ENCODE measurements at regions of chr7 and their contacts with region 1.

Region 1: DNA sequence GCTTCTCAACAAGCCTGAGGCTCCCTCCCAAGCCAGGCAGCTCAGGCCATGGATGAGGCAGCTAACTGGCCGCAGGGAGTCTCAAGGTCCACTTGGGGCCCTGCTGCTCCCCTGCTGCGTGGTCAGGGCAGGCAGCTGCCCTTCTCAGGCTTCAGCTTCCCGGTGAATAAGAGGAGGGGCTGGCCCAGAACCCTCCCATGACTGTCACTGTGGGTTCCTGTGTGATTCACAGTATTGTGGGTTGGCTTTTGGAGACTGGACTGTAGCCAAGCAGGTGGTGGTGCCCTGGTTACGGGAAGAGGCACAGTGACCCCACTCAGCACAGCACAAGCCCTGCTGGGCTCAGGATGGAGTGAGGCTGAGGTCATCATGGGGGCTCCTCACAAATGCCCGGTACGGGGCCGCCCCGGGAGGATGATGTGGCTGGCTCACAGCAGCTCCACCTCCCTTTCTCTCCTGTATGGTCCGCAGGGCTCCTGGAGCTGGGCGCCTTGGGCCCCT is 189.8 kb downstream of the HECW1 start:
- DNase-seq: peak; percentile 68
- ATAC-seq: peak; percentile 81
- H3K4me3 Mint-ChIP-seq: no peak overlapping the region
- H3K27ac Mint-ChIP-seq: no peak overlapping the region
- H3K4me1 Mint-ChIP-seq: peaks cover 32% of the 10 kb centered on the region
- H3K27me3 Mint-ChIP-seq: peaks cover 16% of the 10 kb centered on the region
- CTCF ChIP-seq: no peak

Region 2: DNA sequence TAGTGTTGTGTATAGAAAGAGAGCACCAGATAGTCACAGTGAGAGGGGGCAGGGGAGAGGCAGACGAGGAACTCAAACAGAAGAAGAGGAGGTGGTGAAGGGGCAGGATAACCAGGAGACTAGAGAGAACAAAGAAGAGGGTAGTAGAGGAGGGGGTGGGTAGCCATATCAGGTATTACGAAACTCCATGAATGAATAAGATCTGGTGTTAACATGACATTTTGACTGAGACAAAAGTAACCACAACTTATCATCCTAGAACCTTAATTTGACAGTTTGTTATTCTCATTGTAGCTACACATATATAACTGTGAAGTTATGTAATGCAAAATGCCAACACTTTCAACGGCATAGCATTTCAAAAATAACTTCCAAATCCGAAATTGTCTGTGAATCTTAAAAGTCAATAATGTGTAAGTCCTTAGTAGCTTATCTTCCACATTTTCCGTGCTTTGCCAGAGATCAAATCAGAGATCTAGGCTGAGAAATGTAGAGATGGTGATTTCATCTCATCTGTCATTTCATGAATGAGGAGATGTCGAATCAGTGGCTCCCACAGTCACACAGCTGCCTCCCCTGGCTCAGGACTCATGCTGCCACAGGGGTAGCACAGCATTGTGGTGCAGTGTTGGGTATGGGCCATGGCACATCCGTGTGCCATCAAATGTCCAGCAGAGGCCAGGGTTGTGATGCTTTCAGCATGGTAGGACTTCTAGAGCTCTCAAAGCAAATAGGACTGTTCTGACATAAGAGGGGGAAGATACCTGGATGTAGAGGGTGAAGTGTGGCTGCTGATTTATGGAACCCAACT is 12.3 kb after region 1 on chr7:
- CTCF ChIA-PET with region 1: interaction called, 20 read pairs
- POLR2A ChIA-PET with region 1: interaction called, 3 read pairs
- intact Hi-C with region 1: no loop called
- DNase-seq: peak; percentile 48
- ATAC-seq: peak; percentile 88
- H3K4me3 Mint-ChIP-seq: no peak overlapping the region
- H3K27ac Mint-ChIP-seq: no peak overlapping the region
- H3K4me1 Mint-ChIP-seq: peaks cover 16% of the 10 kb centered on the region
- H3K27me3 Mint-ChIP-seq: peaks cover 3% of the 10 kb centered on the region
- CTCF ChIP-seq: no peak

Region 3: GRCh38 chr7:43647673-43648472 is 345.6 kb after region 1 on chr7:
- CTCF ChIA-PET with region 1: no interaction called
- POLR2A ChIA-PET with region 1: no interaction called
- intact Hi-C with region 1: no loop called
- DNase-seq: peak; percentile 74
- ATAC-seq: peak; percentile 58
- H3K4me3 Mint-ChIP-seq: peak overlapping the region; percentile 57
- H3K27ac Mint-ChIP-seq: peak overlapping the region; percentile 99
- H3K4me1 Mint-ChIP-seq: peaks cover 93% of the 10 kb centered on the region
- H3K27me3 Mint-ChIP-seq: no peaks in the 10 kb centered on the region
- CTCF ChIP-seq: no peak

Region 4: DNA sequence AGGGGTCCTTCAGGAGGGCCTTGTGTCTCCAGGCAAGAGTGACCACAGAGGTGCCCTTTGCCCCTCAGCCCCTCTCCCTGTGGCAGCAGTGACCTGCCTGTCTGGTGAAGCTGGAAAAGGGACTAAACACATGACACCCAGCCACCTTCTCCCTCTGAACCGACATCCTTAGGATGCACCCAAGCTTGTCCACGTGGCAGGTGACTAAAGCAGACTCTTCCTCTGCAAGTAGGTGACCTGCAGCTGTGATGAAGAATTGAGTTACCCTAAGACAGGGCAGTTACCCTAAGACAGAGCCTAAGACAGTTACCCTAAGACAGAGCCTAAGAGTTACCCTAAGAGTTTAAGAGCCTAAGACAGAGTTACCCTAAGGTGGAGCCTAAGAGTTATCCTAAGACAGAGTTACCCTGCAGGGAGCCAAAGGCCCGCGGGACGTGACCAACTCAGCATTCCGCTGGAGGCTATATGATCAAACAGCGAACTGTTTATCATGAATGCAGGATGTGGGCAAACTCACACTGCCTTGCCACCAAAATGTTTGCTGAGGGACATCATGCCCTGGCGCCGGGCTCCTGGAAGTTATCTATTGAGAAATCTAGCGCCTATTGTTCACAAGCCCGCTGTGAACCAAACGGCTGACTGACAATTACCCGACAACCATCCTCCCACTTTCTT is 506.0 kb after region 1 on chr7:
- CTCF ChIA-PET with region 1: no interaction called
- POLR2A ChIA-PET with region 1: no interaction called
- intact Hi-C with region 1: no loop called
- DNase-seq: no peak
- ATAC-seq: no peak
- H3K4me3 Mint-ChIP-seq: no peak overlapping the region
- H3K27ac Mint-ChIP-seq: no peak overlapping the region
- H3K4me1 Mint-ChIP-seq: no peaks in the 10 kb centered on the region
- H3K27me3 Mint-ChIP-seq: no peaks in the 10 kb centered on the region
- CTCF ChIP-seq: no peak

Measured in activated CD8-positive, alpha-beta T cell treated with anti-CD3 and anti-CD28 coated beads for 36 hours (primary cell).